ENCODE measurements at regions of chr15 and their contacts with region 1.

Region 1: DNA sequence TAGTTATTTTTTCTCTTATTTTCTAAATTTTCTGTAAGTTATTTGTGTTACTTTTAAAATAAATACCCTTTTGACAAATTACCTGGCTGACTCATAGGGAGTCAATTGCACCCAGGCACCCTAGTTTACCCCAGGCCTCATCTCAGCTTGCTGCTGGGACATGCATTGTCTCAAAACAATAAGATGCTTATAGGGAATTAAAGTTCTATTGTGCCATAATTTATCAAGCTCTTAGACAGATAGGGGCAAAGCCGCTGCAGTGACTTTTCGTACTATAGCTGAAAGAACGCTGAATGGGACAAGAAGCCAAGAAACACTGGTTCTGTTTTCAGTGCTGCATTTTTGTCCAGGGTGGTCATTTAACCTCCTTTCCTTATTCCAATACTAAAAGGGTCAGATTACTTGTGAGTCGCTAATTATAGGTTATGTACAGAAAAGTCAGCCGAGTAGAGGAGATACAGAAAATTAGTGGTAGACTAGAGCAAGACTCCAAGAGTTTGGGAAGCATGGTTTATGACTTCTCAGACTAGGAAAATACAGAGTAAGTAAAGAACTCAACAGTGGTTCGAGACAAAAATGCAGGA is 50.3 kb downstream of the EXD1 start:
- DNase-seq: no peak
- H3K4me3 Mint-ChIP-seq: no peak overlapping the region
- H3K27ac Mint-ChIP-seq: no peak overlapping the region
- H3K4me1 Mint-ChIP-seq: no peaks in the 10 kb centered on the region
- H3K27me3 Mint-ChIP-seq: peaks cover 15% of the 10 kb centered on the region

Region 2: GRCh38 chr15:40857601-40858341 is 322.5 kb before region 1 on chr15:
- intact Hi-C with region 1: loop called (anchors 5 kb)
- DNase-seq: peak; percentile 77
- H3K4me3 Mint-ChIP-seq: no peak overlapping the region
- H3K27ac Mint-ChIP-seq: no peak overlapping the region
- H3K4me1 Mint-ChIP-seq: peaks cover 18% of the 10 kb centered on the region
- H3K27me3 Mint-ChIP-seq: no peaks in the 10 kb centered on the region

Region 3: DNA sequence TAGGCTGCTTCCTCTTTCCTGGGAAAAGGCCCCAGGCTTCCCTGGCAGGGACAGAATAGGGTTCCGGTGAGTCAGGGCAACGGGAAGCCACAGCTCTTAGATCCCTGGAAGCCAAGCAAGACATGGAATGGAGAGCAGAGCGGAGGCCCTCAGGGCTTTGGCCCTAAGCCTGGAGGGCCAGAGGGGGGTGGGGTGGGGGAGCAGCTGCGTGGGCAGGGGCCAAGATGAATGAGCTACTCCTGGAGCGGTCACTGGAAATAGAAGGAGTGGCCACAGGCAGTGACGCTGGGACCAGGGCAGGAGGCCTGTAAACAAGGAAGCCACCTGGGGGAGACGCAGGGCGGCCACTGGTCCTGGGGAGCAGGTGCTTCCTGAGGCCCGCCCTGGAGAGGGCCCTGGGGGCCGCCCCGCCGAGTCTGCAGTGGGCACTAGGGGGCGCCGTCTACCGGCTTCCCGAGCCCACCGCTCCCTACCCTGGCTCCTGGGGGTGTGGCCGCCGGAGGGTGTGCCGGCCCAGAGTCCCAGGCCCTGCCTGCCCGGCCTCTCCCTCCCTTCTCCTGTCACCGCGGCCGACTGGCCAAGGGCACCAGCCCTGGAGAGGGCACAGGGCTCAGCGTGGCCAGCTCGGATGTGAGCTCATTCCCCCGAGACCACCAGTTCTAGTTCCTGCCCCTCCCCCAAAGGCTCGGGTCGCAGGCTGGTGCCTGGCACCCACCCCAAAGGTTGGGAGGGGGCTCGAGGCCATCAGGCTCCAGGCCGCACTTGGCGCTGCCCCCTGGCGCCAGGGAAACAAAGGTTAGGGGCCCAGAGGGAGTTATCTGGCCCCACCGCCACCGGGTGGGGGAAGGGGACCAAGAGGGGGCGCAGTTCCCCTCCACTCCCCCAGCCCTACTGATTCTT is 274.0 kb before region 1 on chr15:
- intact Hi-C with region 1: loop called (anchors 1 kb)
- DNase-seq: peak; percentile 55
- H3K4me3 Mint-ChIP-seq: no peak overlapping the region
- H3K27ac Mint-ChIP-seq: no peak overlapping the region
- H3K4me1 Mint-ChIP-seq: peaks cover 21% of the 10 kb centered on the region
- H3K27me3 Mint-ChIP-seq: no peaks in the 10 kb centered on the region

Region 4: GRCh38 chr15:41022487-41023090 is 157.7 kb before region 1 on chr15:
- intact Hi-C with region 1: loop called (anchors 10 kb)
- DNase-seq: peak; percentile 16
- H3K4me3 Mint-ChIP-seq: no peak overlapping the region
- H3K27ac Mint-ChIP-seq: no peak overlapping the region
- H3K4me1 Mint-ChIP-seq: peaks cover 13% of the 10 kb centered on the region
- H3K27me3 Mint-ChIP-seq: no peaks in the 10 kb centered on the region

Region 5: GRCh38 chr15:41085029-41085428 is 95.3 kb before region 1 on chr15:
- intact Hi-C with region 1: loop called (anchors 5 kb)
- DNase-seq: no peak
- H3K4me3 Mint-ChIP-seq: no peak overlapping the region
- H3K27ac Mint-ChIP-seq: no peak overlapping the region
- H3K4me1 Mint-ChIP-seq: peaks cover 25% of the 10 kb centered on the region
- H3K27me3 Mint-ChIP-seq: no peaks in the 10 kb centered on the region

Region 6: DNA sequence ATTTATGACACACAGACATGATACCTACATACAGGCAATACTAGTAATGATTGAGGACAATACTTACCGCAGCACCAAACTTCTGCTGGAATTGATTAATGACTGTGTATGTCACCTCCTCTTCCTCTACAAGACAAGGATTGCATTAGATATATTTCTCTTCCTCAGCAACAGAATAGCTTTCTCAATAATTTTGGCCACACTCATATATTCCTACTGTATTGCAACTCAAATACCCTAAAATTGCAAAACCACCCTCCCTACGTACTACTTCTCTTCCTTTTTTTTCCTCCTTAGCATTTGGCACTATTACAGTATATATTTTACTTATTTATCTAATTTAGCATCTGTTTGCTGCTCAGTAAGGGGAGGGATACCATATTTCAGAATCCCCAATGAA is 35.4 kb after region 1 on chr15:
- intact Hi-C with region 1: no loop called
- DNase-seq: no peak
- H3K4me3 Mint-ChIP-seq: no peak overlapping the region
- H3K27ac Mint-ChIP-seq: no peak overlapping the region
- H3K4me1 Mint-ChIP-seq: no peaks in the 10 kb centered on the region
- H3K27me3 Mint-ChIP-seq: peaks cover 47% of the 10 kb centered on the region

Region 7: DNA sequence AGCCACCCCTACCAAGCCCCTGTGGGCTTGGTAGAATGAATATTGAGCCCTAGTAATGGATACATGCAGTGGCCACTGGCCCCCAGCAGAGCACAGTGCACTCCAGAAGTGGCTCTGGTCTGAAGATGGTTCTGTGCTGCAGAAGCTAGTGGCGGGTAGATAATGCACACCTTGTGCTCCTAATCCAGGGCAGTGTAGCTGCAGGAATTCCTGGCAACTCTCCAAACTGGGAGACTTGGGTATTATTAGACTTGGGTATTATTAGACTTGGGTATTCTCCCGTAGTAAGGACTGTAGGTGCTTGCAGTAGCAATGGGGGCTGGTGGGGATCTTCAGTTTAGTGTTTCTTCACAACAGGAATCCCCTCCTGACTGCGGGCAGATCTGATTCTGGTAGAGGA is 187.1 kb after region 1 on chr15:
- intact Hi-C with region 1: no loop called
- DNase-seq: no peak
- H3K4me3 Mint-ChIP-seq: no peak overlapping the region
- H3K27ac Mint-ChIP-seq: no peak overlapping the region
- H3K4me1 Mint-ChIP-seq: peaks cover 4% of the 10 kb centered on the region
- H3K27me3 Mint-ChIP-seq: no peaks in the 10 kb centered on the region

Measured in activated T-helper 1 cell treated with anti-CD3 and anti-CD28 coated beads, Interleukin-12 subunit alpha, Interleukin-12 subunit beta, Interleukin-2, Interleukin-4 antibody, amounts not matched to agents 30 ng/mL and 10 ng/mL and 1 ng/mL, durations not matched to agents 14 hours and 24 hours and 36 hours (primary cell).